ENCODE measurements at regions of chr14 and their contacts with region 1.

Region 1: GRCh38 chr14:67426983-67427606 is 15.1 kb upstream of the PLEK2 start:
- DNase-seq: no peak
- H3K4me3 ChIP-seq: no peak overlapping the region
- H3K27me3 ChIP-seq: no peaks in the 10 kb centered on the region; the same call in 1 of the 2 replicates
- CTCF ChIP-seq: peak; percentile 88

Region 2: GRCh38 chr14:67352055-67352454 is 75.0 kb before region 1 on chr14:
- CTCF ChIA-PET with region 1: no interaction called
- POLR2A ChIA-PET with region 1: no interaction called
- DNase-seq: no peak
- H3K4me3 ChIP-seq: no peak overlapping the region
- H3K27me3 ChIP-seq: no peaks in the 10 kb centered on the region
- CTCF ChIP-seq: no peak

Region 3: DNA sequence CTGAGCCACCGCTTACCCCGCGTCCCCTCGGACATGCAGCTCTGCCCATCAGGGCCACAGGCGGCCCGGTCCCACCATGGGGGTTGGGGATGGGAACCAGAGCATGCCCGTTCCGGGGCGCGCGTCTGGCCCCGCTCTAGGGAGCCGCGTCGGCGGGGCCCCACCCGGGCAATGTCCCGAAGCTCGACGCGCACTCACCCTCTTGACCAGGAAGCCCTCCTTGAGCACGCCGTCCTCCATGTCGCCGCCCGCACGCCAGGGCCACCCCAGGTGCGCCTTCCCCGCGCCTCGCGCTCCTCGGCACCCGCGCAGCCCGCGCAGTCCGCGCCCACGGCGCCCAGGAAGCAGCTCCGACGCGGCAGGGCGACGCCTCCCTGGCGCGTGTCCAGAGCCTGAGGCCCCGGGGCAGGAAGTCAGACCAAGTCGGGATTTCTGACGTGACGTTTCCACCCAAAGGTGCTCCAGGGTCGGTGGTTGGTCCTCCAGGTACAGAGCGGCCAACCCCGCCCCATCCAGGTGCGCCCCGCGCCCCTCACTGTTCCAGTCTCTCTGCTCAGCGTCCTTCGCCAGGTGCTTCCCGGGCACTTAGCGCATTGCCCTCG is 15.2 kb before region 1 on chr14 and contains the start of gene PLEK2:
- CTCF ChIA-PET with region 1: interaction called, 90 read pairs
- POLR2A ChIA-PET with region 1: no interaction called
- DNase-seq: no peak
- H3K4me3 ChIP-seq: peak within 1 kb of the TSS; percentile 44
- H3K27me3 ChIP-seq: no peaks in the 10 kb centered on the region
- CTCF ChIP-seq: no peak
- polyA plus RNA-seq, gene PLEK2: 2.2 and 3.1 TPM in 2 replicates

Region 4: GRCh38 chr14:67440541-67440940 is 13.4 kb after region 1 on chr14:
- CTCF ChIA-PET with region 1: interaction called, 31 read pairs
- POLR2A ChIA-PET with region 1: no interaction called
- DNase-seq: no peak
- H3K4me3 ChIP-seq: no peak overlapping the region
- H3K27me3 ChIP-seq: peaks cover 11% of the 10 kb centered on the region
- CTCF ChIP-seq: no peak

Region 5: DNA sequence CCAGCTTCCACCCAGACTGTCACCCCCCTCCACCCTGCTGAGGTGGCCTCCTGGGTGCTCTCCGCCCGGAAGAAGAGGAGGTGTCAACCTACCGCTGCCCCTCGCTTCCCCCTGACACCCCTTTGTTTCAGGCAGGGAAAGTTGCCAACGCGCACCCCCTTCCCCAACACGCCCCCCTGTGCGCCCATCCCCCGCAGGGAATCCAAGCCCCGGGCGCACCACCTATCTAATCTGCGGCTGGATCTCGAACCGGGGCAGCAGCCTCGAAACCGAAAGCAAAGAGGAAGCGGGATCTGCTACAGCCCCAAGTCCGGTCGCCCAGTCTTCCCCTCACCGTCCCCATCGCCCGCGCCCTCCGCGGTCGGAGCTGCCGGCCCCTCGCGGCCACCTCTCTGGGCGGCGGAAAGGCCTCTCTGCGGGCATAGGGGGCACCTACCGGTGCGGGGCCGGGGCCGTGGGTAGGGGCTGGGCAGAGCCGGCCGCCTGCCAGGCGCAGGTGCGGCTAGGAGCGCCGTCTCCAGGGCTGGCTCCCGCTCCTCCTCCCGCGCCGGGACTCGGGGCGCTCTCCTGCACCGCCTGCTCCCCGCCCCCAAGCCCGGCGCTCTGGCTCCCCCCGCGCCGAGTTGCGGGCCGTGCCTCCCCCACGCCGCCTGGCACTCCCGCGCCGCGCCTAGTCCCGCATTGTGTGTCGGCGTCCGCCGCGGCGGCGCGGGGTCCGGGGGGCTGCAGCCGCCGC is 87.7 kb after region 1 on chr14:
- CTCF ChIA-PET with region 1: interaction called, 11 read pairs
- POLR2A ChIA-PET with region 1: no interaction called
- DNase-seq: no peak
- H3K4me3 ChIP-seq: peak overlapping the region; percentile 59
- H3K27me3 ChIP-seq: peaks cover 28% of the 10 kb centered on the region
- CTCF ChIP-seq: no peak

Region 6: GRCh38 chr14:67532998-67533753 is 106.1 kb after region 1 on chr14 and contains the start of gene PLEKHH1:
- CTCF ChIA-PET with region 1: interaction called, 17 read pairs
- POLR2A ChIA-PET with region 1: no interaction called
- DNase-seq: no peak
- H3K4me3 ChIP-seq: peak within 1 kb of the TSS; percentile 47
- H3K27me3 ChIP-seq: peaks cover 2% of the 10 kb centered on the region; the same call in 1 of the 2 replicates
- CTCF ChIP-seq: no peak
- polyA plus RNA-seq, gene PLEKHH1: 0.16 and 0.53 TPM in 2 replicates